Body of pancreas (tissue), 4 donors: ENCODE measurements at regions of chr1 and their contacts with region 1.

Region 1: GRCh38 chr1:18597160-18598042 is 33.2 kb upstream of the PAX7 start:
- DNase-seq: peak; percentile 55 to 71 (median 66)
- ATAC-seq: peak; percentile 74
- H3K4me3 ChIP-seq: no peak overlapping the region
- H3K27ac ChIP-seq: no peak overlapping the region
- H3K4me1 ChIP-seq: no peaks in the 10 kb centered on the region
- H3K27me3 ChIP-seq: no peaks in the 10 kb centered on the region
- CTCF ChIP-seq: peak; percentile 88 to 95 (median 90)
- POLR2A ChIP-seq: no peak

Region 2: DNA sequence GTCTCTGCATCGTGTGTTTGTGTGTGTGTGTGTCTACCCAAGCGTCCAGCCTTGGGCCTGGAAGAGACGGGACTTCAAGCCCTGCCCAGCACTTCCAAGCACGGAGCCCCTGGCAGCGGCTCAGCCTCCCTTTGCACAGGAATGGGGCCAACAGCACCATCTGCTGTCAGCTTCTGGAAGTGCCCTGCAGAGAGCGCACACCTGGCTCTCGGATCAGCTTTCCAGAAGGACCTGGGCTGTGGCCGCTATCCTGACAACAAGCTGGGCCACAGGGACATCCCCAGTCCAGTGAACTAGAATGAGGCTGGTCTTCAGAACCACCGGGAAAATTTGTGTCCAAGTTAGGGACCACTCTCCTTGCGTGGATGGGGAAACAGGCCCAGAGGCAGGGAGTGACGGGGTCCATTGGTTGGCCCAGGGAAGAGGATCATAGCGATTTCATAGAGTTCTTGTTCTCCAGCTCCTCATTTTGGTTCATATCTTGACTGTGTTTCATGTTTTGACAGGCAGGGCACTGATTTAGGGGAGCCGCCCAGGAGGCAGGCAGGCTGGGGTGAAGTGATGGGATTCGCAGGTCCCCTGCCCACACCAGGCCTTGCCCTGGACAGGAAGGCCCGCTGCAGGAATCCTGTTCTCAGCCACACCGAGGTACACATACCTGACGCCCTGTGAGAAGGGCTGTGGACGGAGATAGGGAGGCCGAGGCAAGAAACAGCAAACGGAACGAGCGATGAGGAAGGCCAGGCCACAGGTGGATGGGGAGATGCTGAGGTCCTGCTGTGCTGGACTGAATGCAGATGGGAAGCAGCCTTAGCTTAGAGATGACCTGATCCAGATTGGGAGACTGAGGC is 223.6 kb after region 1 on chr1:
- intact Hi-C with region 1: loop called (anchors 5 kb)
- DNase-seq: peak; percentile 77 to 88 (median 81)
- ATAC-seq: peak; percentile 91
- H3K4me3 ChIP-seq: no peak overlapping the region
- H3K27ac ChIP-seq: no peak overlapping the region
- H3K4me1 ChIP-seq: no peaks in the 10 kb centered on the region
- H3K27me3 ChIP-seq: peaks cover 0 to 7% of the 10 kb centered on the region in 2 donors
- CTCF ChIP-seq: peak; percentile 80 to 88 (median 81)
- POLR2A ChIP-seq: no peak

Region 3: DNA sequence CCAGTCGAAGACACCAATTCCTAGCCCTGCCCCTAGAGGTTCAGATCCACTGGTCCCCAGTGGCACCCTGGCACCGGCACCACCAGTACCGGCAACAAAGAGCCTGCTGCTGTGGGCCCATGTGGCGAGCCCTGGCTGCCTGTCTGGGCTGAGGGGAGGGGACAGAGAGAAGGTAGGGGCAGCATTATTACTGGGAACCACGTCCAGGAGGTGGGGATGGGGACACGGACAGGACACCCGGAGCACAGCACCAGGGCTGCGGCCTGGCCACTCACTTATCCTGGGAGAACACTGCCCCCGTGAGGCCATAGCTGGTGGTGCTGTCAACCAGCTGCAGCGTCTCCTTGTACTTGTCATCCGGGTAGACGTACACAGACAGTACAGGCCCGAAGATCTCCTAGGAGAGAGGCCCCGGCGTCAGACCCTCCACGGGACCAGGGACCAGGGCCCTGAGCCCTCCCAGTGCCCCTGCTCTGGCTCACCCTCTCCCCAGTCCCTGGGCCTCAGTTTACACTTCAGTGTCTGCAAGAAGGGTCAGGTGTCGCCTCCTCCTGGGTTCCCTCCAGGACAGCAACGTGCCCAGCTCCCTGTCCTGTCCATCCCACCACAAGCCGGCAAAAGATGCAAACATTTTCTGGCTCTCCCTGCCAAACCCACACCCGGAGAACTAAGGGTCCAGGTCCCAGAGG is 277.9 kb after region 1 on chr1:
- intact Hi-C with region 1: loop called (anchors 5 kb)
- DNase-seq: peak; percentile 83 to 88 (median 86)
- ATAC-seq: peak; percentile 81
- H3K4me3 ChIP-seq: no peak overlapping the region
- H3K27ac ChIP-seq: no peak overlapping the region
- H3K4me1 ChIP-seq: peaks cover under 1% of the 10 kb centered on the region
- H3K27me3 ChIP-seq: no peaks in the 10 kb centered on the region
- CTCF ChIP-seq: peak; percentile 67 to 91 (median 74)
- POLR2A ChIP-seq: no peak